Mammary epithelial cell (primary cell): ENCODE measurements at regions of chr7 and their contacts with region 1.

Region 1: DNA sequence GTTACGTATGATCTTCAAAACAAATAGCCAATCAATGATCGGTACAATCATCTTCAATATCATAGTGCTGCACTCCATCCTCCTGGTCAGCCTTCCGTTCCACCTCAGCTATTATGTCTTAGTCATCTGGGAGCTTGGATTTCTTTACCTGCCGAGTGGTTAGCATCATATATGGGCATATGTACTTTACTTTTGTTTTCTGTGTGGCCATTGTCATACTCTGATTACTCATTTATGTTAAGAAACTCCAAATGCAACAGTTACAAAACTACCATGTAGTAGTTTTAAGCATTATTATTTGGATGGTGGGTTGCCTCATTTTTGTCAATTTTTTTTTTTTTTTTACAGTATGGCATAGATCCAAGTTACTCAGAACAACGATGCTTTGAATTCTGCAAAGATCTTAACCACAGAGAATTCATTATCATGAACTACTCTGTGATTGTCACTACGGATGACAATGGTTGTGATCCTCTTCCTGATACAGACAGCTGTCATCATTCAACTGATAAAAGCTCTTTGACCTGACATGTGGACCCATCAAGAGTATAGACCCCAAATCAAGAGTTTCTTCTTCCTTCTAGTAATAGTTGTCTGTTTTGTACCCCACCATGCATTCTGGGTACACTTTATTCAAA is 52.1 kb upstream of the NME8 start:
- DNase-seq: no peak
- H3K4me3 ChIP-seq: no peak overlapping the region
- H3K27ac ChIP-seq: no peak overlapping the region
- H3K4me1 ChIP-seq: no peaks in the 10 kb centered on the region
- H3K27me3 ChIP-seq: no peaks in the 10 kb centered on the region
- CTCF ChIP-seq: no peak

Region 2: GRCh38 chr7:37666026-37666780 is 130.1 kb before region 1 on chr7:
- CTCF ChIA-PET with region 1: interaction called, 11 read pairs
- dilution Hi-C with region 1: no loop called
- in situ Hi-C with region 1: no loop called
- intact Hi-C with region 1: no loop called
- DNase-seq: peak; percentile 39
- H3K4me3 ChIP-seq: no peak overlapping the region
- H3K27ac ChIP-seq: no peak overlapping the region
- H3K4me1 ChIP-seq: no peaks in the 10 kb centered on the region
- H3K27me3 ChIP-seq: no peaks in the 10 kb centered on the region
- CTCF ChIP-seq: no peak

Region 3: DNA sequence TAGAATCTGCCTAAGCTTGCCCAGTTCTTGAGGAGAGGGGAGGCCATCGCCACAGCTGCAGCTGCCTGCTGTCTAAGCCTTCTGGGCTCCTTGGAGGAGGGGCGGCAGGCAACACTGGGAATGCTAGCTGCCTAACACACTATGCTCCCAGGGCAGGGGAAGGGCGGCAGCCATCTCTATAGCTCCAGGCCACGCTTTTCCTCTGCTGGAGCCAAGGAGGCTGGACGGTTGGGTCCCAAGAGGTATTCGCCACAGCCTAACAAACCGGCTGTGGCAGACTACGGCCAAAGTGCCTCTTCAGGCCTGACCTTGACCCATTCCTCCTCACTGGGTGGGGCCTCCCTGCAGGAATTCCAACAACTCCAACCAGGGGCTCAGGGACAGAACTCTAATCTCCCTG is 32.9 kb before region 1 on chr7:
- CTCF ChIA-PET with region 1: no interaction called
- dilution Hi-C with region 1: loop called (anchors 5 kb)
- in situ Hi-C with region 1: no loop called
- intact Hi-C with region 1: no loop called
- DNase-seq: no peak
- H3K4me3 ChIP-seq: no peak overlapping the region
- H3K27ac ChIP-seq: no peak overlapping the region
- H3K4me1 ChIP-seq: no peaks in the 10 kb centered on the region
- H3K27me3 ChIP-seq: no peaks in the 10 kb centered on the region
- CTCF ChIP-seq: no peak